Right ventricle myocardium inferior (tissue), 1 donor: ENCODE measurements at regions of chr11 and their contacts with region 1.

Region 1: GRCh38 chr11:90542092-90542491 is 319.2 kb upstream of the CHORDC1 start:
- DNase-seq: no peak
- ATAC-seq: no peak

Region 2: DNA sequence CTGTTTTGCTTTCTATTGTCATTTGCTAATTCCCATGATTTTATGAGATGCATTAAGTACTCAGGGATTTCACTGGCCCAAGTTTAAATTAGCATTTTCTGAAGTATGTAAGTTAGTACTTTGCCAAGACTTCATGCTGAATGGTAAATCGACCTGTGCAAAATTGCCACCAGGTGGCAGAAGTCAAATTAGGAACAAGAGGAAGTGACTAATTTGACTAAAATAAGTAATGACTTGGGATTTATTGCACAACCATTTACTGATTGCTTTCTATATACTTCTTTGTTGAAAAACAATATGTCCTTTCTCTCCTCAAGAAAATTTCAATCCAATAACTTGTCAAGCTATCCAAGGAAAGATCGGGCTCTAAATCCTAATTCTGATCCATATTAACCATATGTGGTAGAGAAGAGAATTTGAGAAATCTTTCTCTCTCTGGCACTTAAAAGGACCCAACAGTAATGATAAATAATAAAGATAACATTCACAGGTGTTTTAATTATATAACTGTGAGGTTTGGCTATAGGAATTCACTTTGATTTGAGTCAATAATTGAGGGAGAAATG is 65.6 kb before region 1 on chr11:
- intact Hi-C with region 1: loop called (anchors 2 kb)
- DNase-seq: no peak
- ATAC-seq: no peak

Region 3: GRCh38 chr11:90774727-90775566 is 232.9 kb after region 1 on chr11:
- intact Hi-C with region 1: no loop called
- DNase-seq: no peak
- ATAC-seq: no peak